Posterior cingulate gyrus (tissue), 11 donors: ENCODE measurements at regions of chr10 and their contacts with region 1.

Region 1: GRCh38 chr10:78302989-78303854 is 269.6 kb downstream of the RPS24 start:
- DNase-seq: peak; percentile 86 to 99 (median 92)

Region 2: DNA sequence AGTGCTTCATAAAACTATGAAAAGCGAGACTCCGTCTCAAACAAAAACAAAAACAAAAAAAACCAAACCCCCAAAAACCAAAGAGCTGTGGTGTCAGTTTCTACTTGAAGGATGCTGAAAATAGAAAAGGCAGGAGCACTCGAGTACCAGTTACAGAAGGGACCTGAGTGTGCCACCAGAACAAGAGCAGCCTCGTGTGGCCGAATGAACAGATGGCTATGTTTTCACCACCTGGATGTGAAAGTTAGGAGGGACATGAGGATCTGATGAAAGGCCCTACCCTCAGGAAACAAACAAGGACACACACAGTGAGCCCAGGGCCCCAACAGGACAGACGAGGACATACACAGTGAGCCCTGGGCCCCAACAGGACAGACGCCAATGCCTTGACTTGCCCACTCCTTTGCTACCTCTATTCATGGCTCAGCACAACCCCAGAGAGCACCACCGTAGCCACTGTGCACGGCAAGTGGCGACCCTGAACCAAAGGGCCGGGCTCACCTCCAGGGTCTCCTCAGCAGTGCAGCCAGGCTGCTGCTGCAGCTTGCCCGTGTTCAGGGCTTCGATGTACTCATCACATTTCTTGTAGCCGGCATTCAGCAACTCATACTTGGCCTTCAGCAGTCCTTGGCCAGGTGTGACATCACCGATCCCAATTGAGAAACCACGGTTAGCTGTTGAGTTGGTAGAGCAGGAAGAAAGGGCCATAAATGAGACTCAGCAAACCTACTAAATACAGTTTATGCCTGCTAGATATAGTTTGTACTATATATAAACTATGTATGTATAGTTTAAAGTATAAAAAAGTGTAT is 298.8 kb before region 1 on chr10:
- intact Hi-C with region 1: no loop called
- DNase-seq: peak in 4 of 10 donors; percentile 22 to 89 (median 66)

Region 3: GRCh38 chr10:78047314-78047891 is 255.8 kb before region 1 on chr10:
- intact Hi-C with region 1: loop called (anchors 5 kb)
- DNase-seq: peak; percentile 81 to 98 (median 96)

Region 4: GRCh38 chr10:78263521-78263988 is 39.7 kb before region 1 on chr10:
- intact Hi-C with region 1: loop called (anchors 5 kb)
- DNase-seq: peak in 9 of 10 donors; percentile 34 to 97 (median 78)

Region 5: GRCh38 chr10:78491812-78492211 is 188.6 kb after region 1 on chr10:
- intact Hi-C with region 1: no loop called
- DNase-seq: peak in 1 of 10 donors; percentile 17

Region 6: DNA sequence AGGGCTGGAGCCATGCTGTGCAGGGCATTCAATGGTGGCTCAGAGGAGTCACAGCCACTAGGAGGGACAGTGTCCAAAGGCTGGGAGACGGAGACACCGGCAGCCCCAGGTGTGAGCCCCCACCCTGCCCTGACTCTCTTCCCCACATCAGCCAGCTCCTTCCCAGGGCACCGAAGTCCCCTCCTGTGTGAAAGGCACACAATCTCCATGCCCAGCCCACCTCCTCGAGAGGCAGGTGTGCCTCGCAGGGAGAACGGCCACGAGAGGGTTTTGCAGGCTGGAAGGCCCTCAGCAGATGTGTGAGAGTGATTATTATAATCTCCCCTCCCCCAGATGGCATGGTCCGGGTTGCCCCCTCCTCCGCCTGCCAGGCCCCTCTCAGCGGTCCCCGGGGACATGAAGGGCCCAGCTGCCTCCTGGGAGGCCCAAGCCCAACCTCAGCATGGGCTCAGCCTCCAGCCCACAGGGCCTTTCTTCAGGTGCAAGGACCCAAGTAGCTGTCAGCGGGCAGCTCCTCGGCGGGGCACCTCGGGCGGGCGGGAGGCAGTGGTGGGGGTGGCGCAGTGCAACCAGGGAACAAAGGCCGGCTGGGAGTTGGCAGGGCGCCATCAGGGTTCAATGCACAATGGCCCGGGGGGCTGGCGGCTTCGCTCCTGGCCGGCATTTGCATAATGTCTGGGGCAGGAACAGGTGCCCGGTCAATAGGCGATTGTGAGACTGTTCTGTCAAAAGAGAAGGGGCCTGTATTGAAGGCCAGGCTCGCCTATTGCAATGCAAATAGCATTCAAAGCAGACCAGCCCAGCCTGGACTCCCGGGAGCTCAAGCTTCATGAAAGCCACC is 610.2 kb after region 1 on chr10:
- intact Hi-C with region 1: loop called (anchors 10 kb)
- DNase-seq: peak; percentile 88 to 99 (median 94)

Region 7: DNA sequence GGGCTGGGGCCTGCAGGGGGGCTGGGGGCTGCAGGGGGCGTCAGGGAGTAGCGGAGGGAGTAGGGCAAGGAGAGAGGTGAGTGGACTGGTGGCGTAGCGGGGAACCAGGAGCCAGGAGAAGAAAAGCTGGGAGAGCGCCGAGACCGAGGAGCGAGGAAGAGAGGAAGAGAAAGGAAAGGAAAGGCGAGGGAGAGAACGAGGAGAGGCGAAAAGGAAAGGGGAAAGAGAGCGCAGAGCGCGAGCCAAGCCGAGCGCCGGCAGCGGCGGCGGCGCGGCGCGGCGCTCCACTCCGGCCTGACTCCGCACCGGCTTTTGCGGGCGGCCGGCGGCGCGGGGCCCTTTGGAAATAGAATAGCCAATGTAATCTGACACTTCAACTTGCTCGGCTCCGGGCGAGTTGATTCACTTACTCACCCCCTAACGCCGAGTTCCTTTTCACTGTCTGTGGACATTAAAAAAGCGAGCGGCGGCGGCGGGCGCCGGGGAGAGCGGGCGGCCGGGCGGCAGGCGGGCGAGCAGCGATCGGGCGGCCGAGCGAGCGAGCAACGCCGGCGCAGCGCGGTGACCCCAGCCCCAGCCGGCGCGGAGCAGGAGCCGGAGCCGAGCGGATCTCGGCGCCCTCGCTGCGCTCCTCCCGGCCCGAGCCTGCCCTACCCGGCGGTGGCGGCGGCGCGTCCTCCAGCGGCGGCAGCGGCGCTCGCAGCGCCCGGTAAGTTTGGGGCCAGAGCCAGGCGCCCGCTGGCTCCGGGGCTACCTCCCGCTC is 765.5 kb after region 1 on chr10 and contains the start of gene ZMIZ1:
- intact Hi-C with region 1: loop called (anchors 5 kb)
- DNase-seq: peak; percentile 75 to 97 (median 84)